Activated naive CD4-positive, alpha-beta T cell treated with anti-CD3 and anti-CD28 coated beads for 36 hours (primary cell): ENCODE measurements at regions of chr17 and their contacts with region 1.

Region 1: GRCh38 chr17:50087246-50087911 is 7.8 kb upstream of the PDK2 start:
- DNase-seq: peak; percentile 85
- H3K4me3 Mint-ChIP-seq: no peak overlapping the region
- H3K27ac Mint-ChIP-seq: no peak overlapping the region
- H3K4me1 Mint-ChIP-seq: no peaks in the 10 kb centered on the region
- H3K27me3 Mint-ChIP-seq: no peaks in the 10 kb centered on the region

Region 2: GRCh38 chr17:49567871-49568694 is 519.3 kb before region 1 on chr17:
- CTCF ChIA-PET with region 1: no interaction called
- intact Hi-C with region 1: loop called (anchors 1 kb)
- DNase-seq: peak; percentile 89
- H3K4me3 Mint-ChIP-seq: peak overlapping the region; percentile 74
- H3K27ac Mint-ChIP-seq: no peak overlapping the region
- H3K4me1 Mint-ChIP-seq: peaks cover 15% of the 10 kb centered on the region
- H3K27me3 Mint-ChIP-seq: peaks cover 8% of the 10 kb centered on the region

Region 3: GRCh38 chr17:49890181-49890821 is 197.1 kb before region 1 on chr17:
- CTCF ChIA-PET with region 1: no interaction called
- intact Hi-C with region 1: no loop called
- DNase-seq: no peak
- H3K4me3 Mint-ChIP-seq: no peak overlapping the region
- H3K27ac Mint-ChIP-seq: no peak overlapping the region
- H3K4me1 Mint-ChIP-seq: no peaks in the 10 kb centered on the region
- H3K27me3 Mint-ChIP-seq: peaks cover 37% of the 10 kb centered on the region

Region 4: DNA sequence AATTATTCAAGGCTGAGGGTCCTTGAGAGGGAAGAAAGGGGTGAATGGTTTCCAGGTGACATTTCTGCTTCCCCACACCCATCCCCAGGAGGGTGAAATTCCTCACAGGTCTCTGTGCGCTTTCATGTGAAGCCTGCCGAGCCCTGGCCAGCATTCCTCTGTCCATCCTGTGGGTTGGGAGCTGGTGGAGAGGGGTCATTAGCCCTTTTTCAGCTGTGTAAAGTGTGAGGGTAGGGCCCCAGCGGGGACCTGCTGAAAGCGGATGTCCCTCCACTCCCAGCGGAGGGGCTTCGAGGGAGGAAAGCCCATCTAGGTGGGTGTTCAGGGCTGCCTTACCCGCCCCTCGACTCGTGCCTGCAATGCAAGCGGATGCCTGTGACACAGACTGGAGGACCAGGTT is 171.7 kb before region 1 on chr17:
- CTCF ChIA-PET with region 1: no interaction called
- intact Hi-C with region 1: no loop called
- DNase-seq: no peak
- H3K4me3 Mint-ChIP-seq: no peak overlapping the region
- H3K27ac Mint-ChIP-seq: no peak overlapping the region
- H3K4me1 Mint-ChIP-seq: peaks cover 3% of the 10 kb centered on the region
- H3K27me3 Mint-ChIP-seq: peaks cover 35% of the 10 kb centered on the region

Region 5: GRCh38 chr17:49952209-49952911 is 135.0 kb before region 1 on chr17:
- CTCF ChIA-PET with region 1: no interaction called
- intact Hi-C with region 1: loop called (anchors 5 kb)
- DNase-seq: peak; percentile 93
- H3K4me3 Mint-ChIP-seq: no peak overlapping the region
- H3K27ac Mint-ChIP-seq: no peak overlapping the region
- H3K4me1 Mint-ChIP-seq: no peaks in the 10 kb centered on the region
- H3K27me3 Mint-ChIP-seq: peaks cover 24% of the 10 kb centered on the region

Region 6: GRCh38 chr17:50026901-50027630 is 60.3 kb before region 1 on chr17:
- CTCF ChIA-PET with region 1: interaction called, 92 read pairs
- intact Hi-C with region 1: loop called (anchors 1 kb)
- DNase-seq: peak; percentile 90
- H3K4me3 Mint-ChIP-seq: peak overlapping the region; percentile 68
- H3K27ac Mint-ChIP-seq: no peak overlapping the region
- H3K4me1 Mint-ChIP-seq: peaks cover 18% of the 10 kb centered on the region
- H3K27me3 Mint-ChIP-seq: peaks cover 25% of the 10 kb centered on the region

Region 7: DNA sequence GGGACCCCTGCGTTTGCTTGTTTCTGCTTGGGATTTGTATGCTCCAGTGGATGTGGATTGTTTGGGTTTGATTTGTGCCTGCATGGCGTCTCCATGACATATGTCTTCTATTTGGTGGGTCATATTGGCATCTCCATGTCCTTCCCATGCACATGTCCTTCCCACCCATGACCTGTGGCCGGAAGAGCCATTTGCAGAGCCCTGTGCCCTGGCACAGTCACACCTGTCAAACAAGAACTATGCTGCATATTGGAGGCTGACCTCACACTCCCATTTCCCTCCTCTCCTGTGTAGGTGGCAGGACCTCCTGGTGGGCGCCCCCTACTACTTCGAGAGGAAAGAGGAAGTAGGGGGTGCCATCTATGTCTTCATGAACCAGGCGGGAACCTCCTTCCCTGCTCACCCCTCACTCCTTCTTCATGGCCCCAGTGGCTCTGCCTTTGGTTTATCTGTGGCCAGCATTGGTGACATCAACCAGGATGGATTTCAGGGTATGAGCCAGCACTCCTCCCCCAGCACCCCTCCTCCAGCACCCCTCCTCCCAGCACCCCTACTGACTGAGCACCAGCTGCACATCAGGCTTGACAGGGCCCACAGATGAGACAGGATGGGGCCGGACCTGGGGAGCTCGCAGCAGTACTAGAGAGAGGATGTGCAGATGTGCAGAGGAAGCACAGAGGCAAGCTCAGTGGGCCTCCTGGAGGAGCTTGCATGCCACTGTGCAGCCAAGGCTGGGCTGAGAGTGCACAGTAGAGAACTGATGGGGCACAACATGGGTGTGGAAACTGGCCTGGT is 15.5 kb before region 1 on chr17:
- CTCF ChIA-PET with region 1: interaction called, 13 read pairs
- intact Hi-C with region 1: no loop called
- DNase-seq: no peak
- H3K4me3 Mint-ChIP-seq: no peak overlapping the region
- H3K27ac Mint-ChIP-seq: no peak overlapping the region
- H3K4me1 Mint-ChIP-seq: no peaks in the 10 kb centered on the region
- H3K27me3 Mint-ChIP-seq: no peaks in the 10 kb centered on the region

Region 8: GRCh38 chr17:50372758-50373556 is 285.6 kb after region 1 on chr17 and contains the starts of genes EME1 and MRPL27:
- CTCF ChIA-PET with region 1: no interaction called
- intact Hi-C with region 1: no loop called
- DNase-seq: peak; percentile 91
- H3K4me3 Mint-ChIP-seq: peak within 1 kb of the TSS; percentile 99
- H3K27ac Mint-ChIP-seq: peak within 1 kb of the TSS; percentile 99
- H3K4me1 Mint-ChIP-seq: peaks cover 30% of the 10 kb centered on the region
- H3K27me3 Mint-ChIP-seq: no peaks in the 10 kb centered on the region
- total RNA-seq, gene EME1: 68.9 to 69.8 TPM
- total RNA-seq, gene MRPL27: 55.1 to 58.2 TPM